ENCODE measurements at regions of chr2 and their contacts with region 1.

Region 1: DNA sequence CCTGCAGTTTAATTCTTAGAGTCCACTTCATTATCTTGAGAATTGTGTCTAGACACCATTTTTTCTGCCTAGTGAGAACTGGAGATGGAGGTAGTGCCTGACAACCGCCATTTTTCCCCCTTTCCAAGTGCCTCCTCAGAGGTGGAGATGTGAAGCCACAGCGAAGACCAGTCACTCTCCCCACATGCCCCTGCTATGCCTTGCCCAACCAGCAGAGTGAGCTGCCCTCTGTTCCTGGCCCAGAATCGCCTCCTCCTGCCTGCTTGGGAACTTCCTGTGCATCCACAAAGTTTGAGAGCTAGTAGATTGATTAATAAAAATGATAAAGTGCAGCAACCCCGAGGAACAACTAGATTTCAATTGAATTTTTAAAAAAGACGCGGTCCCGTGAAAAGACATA is 123.3 kb downstream of the CLIP4 start:
- DNase-seq: no peak
- H3K4me3 ChIP-seq: no peak overlapping the region
- H3K27ac ChIP-seq: no peak overlapping the region
- H3K4me1 ChIP-seq: no peaks in the 10 kb centered on the region
- H3K27me3 ChIP-seq: no peaks in the 10 kb centered on the region
- CTCF ChIP-seq: peak in 4 of 5 experiments; percentile 28 to 36 (median 30)
- EP300 ChIP-seq: no peak
- POLR2A ChIP-seq: no peak

Region 2: GRCh38 chr2:30530346-30530745 is 1291.8 kb after region 1 on chr2:
- in situ Hi-C with region 1: no loop called
- intact Hi-C with region 1: loop called (anchors 5 kb)
- DNase-seq: no peak
- H3K4me3 ChIP-seq: no peak overlapping the region
- H3K27ac ChIP-seq: no peak overlapping the region
- H3K4me1 ChIP-seq: no peaks in the 10 kb centered on the region
- H3K27me3 ChIP-seq: no peaks in the 10 kb centered on the region
- CTCF ChIP-seq: no peak
- EP300 ChIP-seq: no peak
- POLR2A ChIP-seq: no peak